Naive thymus-derived CD4-positive, alpha-beta T cell (primary cell): ENCODE measurements at regions of chr9 and their contacts with region 1.

Region 1: GRCh38 chr9:32526041-32526706 is at the start of gene RIGI:
- DNase-seq: peak; percentile 52 to 85 (median 77)
- ATAC-seq: peak; percentile 84
- H3K4me3 ChIP-seq: peak within 1 kb of the TSS; percentile 98
- H3K4me3 Mint-ChIP-seq: peak within 1 kb of the TSS; percentile 83 to 99 (median 96)
- H3K27ac ChIP-seq: peak within 1 kb of the TSS; percentile 90
- H3K27ac Mint-ChIP-seq: peak within 1 kb of the TSS; percentile 84 to 98 (median 91)
- H3K4me1 ChIP-seq: peaks cover 9 to 29% of the 10 kb centered on the region in 2 donors
- H3K4me1 Mint-ChIP-seq: peaks cover 35 to 61% (median 58%) of the 10 kb centered on the region in 7 donors
- H3K27me3 ChIP-seq: no peaks in the 10 kb centered on the region
- H3K27me3 Mint-ChIP-seq: no peaks in the 10 kb centered on the region
- total RNA-seq, gene RIGI: 8.6 to 29.6 (median 26.8) TPM

Region 2: GRCh38 chr9:32339424-32339823 is 186.8 kb before region 1 on chr9:
- CTCF ChIA-PET with region 1: no interaction called
- POLR2A ChIA-PET with region 1: no interaction called
- intact Hi-C with region 1: no loop called
- DNase-seq: no peak
- ATAC-seq: no peak
- H3K4me3 ChIP-seq: no peak overlapping the region
- H3K4me3 Mint-ChIP-seq: no peak overlapping the region
- H3K27ac ChIP-seq: no peak overlapping the region
- H3K27ac Mint-ChIP-seq: no peak overlapping the region
- H3K4me1 ChIP-seq: no peaks in the 10 kb centered on the region
- H3K4me1 Mint-ChIP-seq: peaks cover 7 to 14% (median 9%) of the 10 kb centered on the region in 7 donors
- H3K27me3 ChIP-seq: no peaks in the 10 kb centered on the region
- H3K27me3 Mint-ChIP-seq: peaks cover 2 to 10% (median 4%) of the 10 kb centered on the region in 5 donors

Region 3: DNA sequence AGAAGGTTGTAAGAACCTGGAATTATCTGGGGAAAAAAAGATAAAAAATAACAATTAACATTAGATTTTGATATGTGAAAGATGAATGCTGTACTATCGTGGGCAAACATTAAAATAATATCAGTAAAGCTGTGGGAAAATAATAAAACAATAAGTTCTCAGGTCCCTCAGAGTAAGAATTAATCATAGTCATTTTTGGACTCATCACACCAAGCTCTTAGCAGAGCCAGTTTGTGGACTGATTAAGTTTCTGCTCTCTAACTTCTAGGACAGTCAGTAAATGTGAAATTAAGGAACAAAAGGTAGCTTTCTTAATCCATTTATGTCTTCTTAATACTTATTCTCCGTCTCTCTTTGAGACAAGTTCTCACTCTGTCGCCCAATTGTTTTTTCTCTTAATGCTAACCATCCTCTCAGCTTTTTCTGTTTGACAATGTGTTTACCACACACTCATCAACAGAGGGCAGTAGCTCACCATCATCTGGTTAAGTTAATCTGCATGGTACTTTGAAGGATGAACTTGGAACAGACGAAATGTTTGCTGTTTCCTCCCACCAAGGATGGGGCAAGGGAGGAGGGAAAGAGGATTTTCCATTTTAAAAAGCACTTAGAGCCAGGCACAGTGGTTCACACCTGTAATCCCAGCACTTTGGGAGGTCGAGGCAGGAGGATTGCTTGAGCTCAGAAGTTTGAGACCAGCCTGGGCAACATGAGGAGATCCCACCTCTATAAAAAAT is 147.0 kb before region 1 on chr9:
- CTCF ChIA-PET with region 1: interaction called, 51 read pairs
- POLR2A ChIA-PET with region 1: interaction called, 13 read pairs
- intact Hi-C with region 1: loop called (anchors 1 kb)
- DNase-seq: peak in 7 of 9 donors; percentile 49 to 78 (median 68)
- ATAC-seq: peak; percentile 90
- H3K4me3 ChIP-seq: no peak overlapping the region
- H3K4me3 Mint-ChIP-seq: peak overlapping the region in 4 of 10 donors; percentile 15 to 49 (median 36)
- H3K27ac ChIP-seq: no peak overlapping the region
- H3K27ac Mint-ChIP-seq: peak overlapping the region in 8 of 9 donors; percentile 1 to 83 (median 32)
- H3K4me1 ChIP-seq: peaks cover 5 to 13% of the 10 kb centered on the region in 2 donors
- H3K4me1 Mint-ChIP-seq: peaks cover 11 to 19% (median 16%) of the 10 kb centered on the region in 7 donors
- H3K27me3 ChIP-seq: no peaks in the 10 kb centered on the region
- H3K27me3 Mint-ChIP-seq: peaks cover 0 to 37% (median 9%) of the 10 kb centered on the region in 5 donors

Region 4: GRCh38 chr9:32431940-32432555 is 94.1 kb before region 1 on chr9:
- CTCF ChIA-PET with region 1: interaction called, 5 read pairs
- POLR2A ChIA-PET with region 1: no interaction called
- intact Hi-C with region 1: loop called in 1 of 2 experiments (anchors 1 kb)
- DNase-seq: peak; percentile 11 to 35 (median 22)
- ATAC-seq: peak; percentile 60
- H3K4me3 ChIP-seq: no peak overlapping the region
- H3K4me3 Mint-ChIP-seq: no peak overlapping the region
- H3K27ac ChIP-seq: no peak overlapping the region
- H3K27ac Mint-ChIP-seq: peak overlapping the region in 1 of 9 donors; percentile 71
- H3K4me1 ChIP-seq: no peaks in the 10 kb centered on the region
- H3K4me1 Mint-ChIP-seq: peaks cover 0 to 5% (median 0%) of the 10 kb centered on the region in 7 donors
- H3K27me3 ChIP-seq: no peaks in the 10 kb centered on the region
- H3K27me3 Mint-ChIP-seq: no peaks in the 10 kb centered on the region

Region 5: GRCh38 chr9:32490601-32491000 is 35.6 kb before region 1 on chr9:
- CTCF ChIA-PET with region 1: no interaction called
- POLR2A ChIA-PET with region 1: no interaction called
- intact Hi-C with region 1: loop called (anchors 2 to 5 kb)
- DNase-seq: no peak
- ATAC-seq: no peak
- H3K4me3 ChIP-seq: no peak overlapping the region
- H3K4me3 Mint-ChIP-seq: no peak overlapping the region
- H3K27ac ChIP-seq: no peak overlapping the region
- H3K27ac Mint-ChIP-seq: peak overlapping the region in 2 of 9 donors; percentile 14 to 39
- H3K4me1 ChIP-seq: no peaks in the 10 kb centered on the region
- H3K4me1 Mint-ChIP-seq: peaks cover 0 to 1% (median 0%) of the 10 kb centered on the region in 7 donors
- H3K27me3 ChIP-seq: no peaks in the 10 kb centered on the region
- H3K27me3 Mint-ChIP-seq: no peaks in the 10 kb centered on the region

Region 6: GRCh38 chr9:32508728-32509127 is 17.4 kb before region 1 on chr9:
- CTCF ChIA-PET with region 1: interaction called, 5 read pairs
- POLR2A ChIA-PET with region 1: interaction called, 7 read pairs
- intact Hi-C with region 1: loop called (anchors 1 to 2 kb)
- DNase-seq: no peak
- ATAC-seq: no peak
- H3K4me3 ChIP-seq: no peak overlapping the region
- H3K4me3 Mint-ChIP-seq: no peak overlapping the region
- H3K27ac ChIP-seq: no peak overlapping the region
- H3K27ac Mint-ChIP-seq: peak overlapping the region in 1 of 9 donors; percentile 67
- H3K4me1 ChIP-seq: peaks cover 0 to 3% of the 10 kb centered on the region in 2 donors
- H3K4me1 Mint-ChIP-seq: peaks cover 28 to 67% (median 46%) of the 10 kb centered on the region in 7 donors
- H3K27me3 ChIP-seq: no peaks in the 10 kb centered on the region
- H3K27me3 Mint-ChIP-seq: no peaks in the 10 kb centered on the region

Region 7: GRCh38 chr9:32579706-32580331 is 53.6 kb after region 1 on chr9:
- CTCF ChIA-PET with region 1: interaction called, 18 read pairs
- POLR2A ChIA-PET with region 1: no interaction called
- intact Hi-C with region 1: no loop called
- DNase-seq: peak; percentile 53 to 77 (median 66)
- ATAC-seq: peak; percentile 81
- H3K4me3 ChIP-seq: no peak overlapping the region
- H3K4me3 Mint-ChIP-seq: no peak overlapping the region
- H3K27ac ChIP-seq: no peak overlapping the region
- H3K27ac Mint-ChIP-seq: peak overlapping the region in 1 of 9 donors; percentile 48
- H3K4me1 ChIP-seq: no peaks in the 10 kb centered on the region
- H3K4me1 Mint-ChIP-seq: peaks cover 0 to 8% (median 0%) of the 10 kb centered on the region in 7 donors
- H3K27me3 ChIP-seq: no peaks in the 10 kb centered on the region
- H3K27me3 Mint-ChIP-seq: peaks cover 4 to 30% (median 7%) of the 10 kb centered on the region in 5 donors

Region 8: GRCh38 chr9:32783169-32783891 is 257.2 kb after region 1 on chr9 and contains the start of gene TMEM215:
- CTCF ChIA-PET with region 1: no interaction called
- POLR2A ChIA-PET with region 1: no interaction called
- intact Hi-C with region 1: no loop called
- DNase-seq: no peak
- ATAC-seq: no peak
- H3K4me3 ChIP-seq: no peak within 1 kb of the TSS
- H3K4me3 Mint-ChIP-seq: no peak within 1 kb of the TSS
- H3K27ac ChIP-seq: no peak within 1 kb of the TSS
- H3K27ac Mint-ChIP-seq: no peak within 1 kb of the TSS
- H3K4me1 ChIP-seq: no peaks in the 10 kb centered on the region
- H3K4me1 Mint-ChIP-seq: peaks cover 0 to 3% (median 0%) of the 10 kb centered on the region in 7 donors
- H3K27me3 ChIP-seq: peaks cover 0 to 3% of the 10 kb centered on the region in 2 donors
- H3K27me3 Mint-ChIP-seq: peaks cover 48 to 73% (median 52%) of the 10 kb centered on the region in 5 donors
- total RNA-seq, gene TMEM215: not detected